ENCODE measurements at regions of chr19 and their contacts with region 1.

Region 1: GRCh38 chr19:12994701-12995595 is at the start of gene NFIX:
- DNase-seq: no peak
- ATAC-seq: peak; percentile 54
- H3K4me3 ChIP-seq: peak within 1 kb of the TSS; percentile 55 to 58
- H3K27ac ChIP-seq: peak within 1 kb of the TSS; percentile 83
- H3K4me1 ChIP-seq: peaks cover 16% of the 10 kb centered on the region
- H3K27me3 ChIP-seq: no peaks in the 10 kb centered on the region
- CTCF ChIP-seq: no peak
- total RNA-seq, gene NFIX: 144 TPM

Region 2: DNA sequence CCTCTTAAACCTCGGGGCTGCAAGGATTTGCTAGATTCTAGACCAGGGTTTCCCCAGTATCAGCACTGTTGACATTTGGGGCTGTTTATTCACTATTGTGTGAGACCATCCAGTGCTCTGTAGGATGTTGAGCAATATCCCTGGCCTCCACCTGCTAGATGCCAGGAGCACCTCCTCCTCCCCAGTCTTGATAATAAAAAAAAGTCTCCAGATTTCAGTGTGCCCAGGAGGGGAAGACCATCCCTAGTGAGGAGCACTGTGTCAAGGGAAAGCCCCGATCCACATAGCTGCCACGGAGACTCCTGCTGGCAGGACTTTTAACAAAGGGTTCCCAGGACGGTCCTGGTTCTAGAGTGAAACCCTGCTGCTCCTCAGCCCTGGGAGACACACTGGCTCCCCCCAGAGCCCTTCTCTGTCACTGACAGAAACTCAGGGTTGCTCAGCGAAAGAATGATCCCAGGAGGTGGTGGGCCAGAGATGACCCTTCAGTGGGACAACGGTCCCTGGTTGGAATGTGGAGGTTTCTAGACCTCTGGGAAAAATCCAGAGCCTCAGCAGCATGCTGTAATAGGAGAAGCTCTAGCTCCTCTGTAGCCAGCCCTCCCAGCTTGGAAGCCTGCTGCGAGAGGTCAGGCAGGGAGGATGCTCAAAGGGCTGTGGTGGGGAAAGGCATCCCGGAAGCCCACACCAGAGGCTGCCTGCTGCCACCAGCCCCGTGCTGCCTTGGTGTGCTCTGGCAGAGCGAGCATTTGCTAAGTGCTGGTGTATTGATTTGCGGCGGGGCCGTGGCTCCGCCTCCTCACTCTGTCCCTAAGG is 87.5 kb after region 1 on chr19:
- CTCF ChIA-PET with region 1: no interaction called
- POLR2A ChIA-PET with region 1: interaction called, 11 read pairs
- in situ Hi-C with region 1: no loop called
- intact Hi-C with region 1: no loop called
- DNase-seq: no peak
- ATAC-seq: peak; percentile 77
- H3K4me3 ChIP-seq: no peak overlapping the region
- H3K27ac ChIP-seq: no peak overlapping the region
- H3K4me1 ChIP-seq: peaks cover 7% of the 10 kb centered on the region
- H3K27me3 ChIP-seq: no peaks in the 10 kb centered on the region
- CTCF ChIP-seq: no peak; the same call in 1 of the 2 replicates

Region 3: DNA sequence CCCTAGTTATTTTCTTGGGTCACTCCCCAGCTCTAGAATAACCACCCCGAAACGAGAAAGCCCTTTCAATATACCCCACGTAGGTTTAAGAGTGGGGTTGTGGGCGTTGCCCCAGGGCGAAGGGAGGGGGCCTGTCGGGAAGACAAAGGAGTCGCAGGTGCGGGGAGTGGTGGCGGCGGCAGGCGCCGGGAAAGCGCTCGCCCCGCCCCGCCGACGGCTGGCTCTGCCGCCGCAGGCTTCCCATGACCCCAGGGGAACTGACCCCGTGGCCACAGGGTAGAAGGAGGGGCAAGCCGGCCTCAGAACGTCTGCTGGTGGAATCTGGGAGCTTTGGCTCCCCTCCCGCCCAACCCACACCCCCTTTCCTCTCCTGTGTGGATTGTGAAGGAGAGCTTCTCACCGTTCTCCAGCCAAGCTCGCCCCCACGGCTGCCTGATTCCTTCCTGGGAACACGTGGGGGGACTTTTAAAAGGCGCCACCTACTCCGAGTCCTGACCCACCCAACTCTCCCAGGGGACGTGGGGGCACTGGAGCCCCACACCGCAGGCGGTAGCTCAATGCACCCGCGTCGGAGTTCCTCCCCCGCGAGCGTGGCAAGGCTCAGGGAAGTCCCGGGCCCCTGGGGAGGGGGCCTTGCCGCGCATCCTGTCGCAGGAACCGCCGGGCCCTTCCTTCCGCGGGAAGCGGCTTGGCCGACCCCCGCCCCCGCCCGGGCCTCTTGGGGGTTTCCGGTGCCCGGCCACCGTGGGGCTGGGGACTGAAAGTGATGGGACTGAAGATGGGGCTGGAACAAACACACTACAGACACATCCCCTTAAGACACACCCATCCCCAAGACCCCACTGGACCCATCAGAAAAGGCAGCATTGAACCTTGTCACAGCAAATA is 160.8 kb after region 1 on chr19:
- CTCF ChIA-PET with region 1: no interaction called
- POLR2A ChIA-PET with region 1: interaction called, 12 read pairs
- in situ Hi-C with region 1: no loop called
- intact Hi-C with region 1: no loop called
- DNase-seq: no peak
- ATAC-seq: peak; percentile 28
- H3K4me3 ChIP-seq: peak overlapping the region; percentile 68 to 90
- H3K27ac ChIP-seq: peak overlapping the region; percentile 96
- H3K4me1 ChIP-seq: peaks cover 15% of the 10 kb centered on the region
- H3K27me3 ChIP-seq: no peaks in the 10 kb centered on the region
- CTCF ChIP-seq: no peak

Region 4: DNA sequence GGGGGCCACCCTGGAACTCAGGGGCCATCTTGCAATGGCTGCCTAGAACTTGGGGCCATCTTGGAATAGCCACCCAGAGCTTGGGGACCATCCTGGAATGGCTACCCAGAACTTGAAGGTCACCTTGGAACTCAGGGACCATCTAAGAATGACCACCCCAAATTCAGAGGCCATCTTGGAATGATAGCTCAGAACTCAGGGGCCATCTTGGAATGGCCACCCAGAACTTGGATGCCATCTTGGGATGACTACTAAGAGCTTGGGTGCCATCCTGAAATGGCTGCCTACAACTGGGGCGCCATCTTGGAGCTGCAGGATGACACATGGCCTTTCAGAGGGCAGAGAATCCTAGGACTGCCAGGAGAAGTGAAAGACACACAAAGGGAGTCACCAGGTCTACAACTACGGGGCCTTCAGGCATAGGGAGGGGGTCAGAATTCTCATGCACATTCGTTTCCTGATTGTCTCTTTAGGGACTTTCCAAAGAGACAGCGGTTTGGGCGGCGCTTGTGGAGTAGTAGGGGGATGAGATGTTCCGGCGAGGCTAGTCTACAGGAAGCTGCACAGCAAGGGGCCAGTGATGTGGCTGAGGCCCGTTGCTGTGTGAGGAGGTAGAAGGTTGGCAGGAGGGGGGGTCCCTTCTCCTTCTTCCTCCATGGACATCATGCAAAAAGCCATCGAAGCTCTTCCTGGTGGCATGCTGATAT is 280.2 kb after region 1 on chr19:
- CTCF ChIA-PET with region 1: no interaction called
- POLR2A ChIA-PET with region 1: no interaction called
- in situ Hi-C with region 1: no loop called
- intact Hi-C with region 1: no loop called
- DNase-seq: no peak
- ATAC-seq: no peak
- H3K4me3 ChIP-seq: no peak overlapping the region
- H3K27ac ChIP-seq: no peak overlapping the region
- H3K4me1 ChIP-seq: no peaks in the 10 kb centered on the region; the same call in 1 of the 2 replicates
- H3K27me3 ChIP-seq: no peaks in the 10 kb centered on the region
- CTCF ChIP-seq: no peak